PC-9 (cell line): ENCODE measurements at regions of chr17 and their contacts with region 1.

Region 1: GRCh38 chr17:75779231-75779986 is 5.2 kb upstream of the UNK start:
- DNase-seq: peak; percentile 94 to 99
- H3K4me3 ChIP-seq: peak overlapping the region; percentile 90
- H3K27ac ChIP-seq: peak overlapping the region; percentile 93
- H3K4me1 ChIP-seq: peaks cover 70% of the 10 kb centered on the region
- H3K27me3 ChIP-seq: no peaks in the 10 kb centered on the region
- CTCF ChIP-seq: no peak

Region 2: GRCh38 chr17:75619506-75620431 is 159.6 kb before region 1 on chr17:
- CTCF ChIA-PET with region 1: interaction called, 19 read pairs
- POLR2A ChIA-PET with region 1: no interaction called
- intact Hi-C with region 1: no loop called
- DNase-seq: no peak
- H3K4me3 ChIP-seq: no peak overlapping the region
- H3K27ac ChIP-seq: no peak overlapping the region
- H3K4me1 ChIP-seq: no peaks in the 10 kb centered on the region
- H3K27me3 ChIP-seq: no peaks in the 10 kb centered on the region
- CTCF ChIP-seq: peak; percentile 70

Region 3: GRCh38 chr17:75814900-75815373 is 35.5 kb after region 1 on chr17:
- CTCF ChIA-PET with region 1: no interaction called
- POLR2A ChIA-PET with region 1: interaction called, 5 read pairs
- intact Hi-C with region 1: loop called (anchors 5 kb)
- DNase-seq: peak; percentile 67 to 73
- H3K4me3 ChIP-seq: no peak overlapping the region
- H3K27ac ChIP-seq: no peak overlapping the region
- H3K4me1 ChIP-seq: peaks cover 10% of the 10 kb centered on the region
- H3K27me3 ChIP-seq: no peaks in the 10 kb centered on the region
- CTCF ChIP-seq: no peak

Region 4: GRCh38 chr17:75855310-75856081 is 76.1 kb after region 1 on chr17 and contains the start of gene WBP2:
- CTCF ChIA-PET with region 1: interaction called, 7 read pairs
- POLR2A ChIA-PET with region 1: interaction called, 9 read pairs
- intact Hi-C with region 1: loop called (anchors 2 kb)
- DNase-seq: peak; percentile 96 to 100
- H3K4me3 ChIP-seq: peak within 1 kb of the TSS; percentile 74
- H3K27ac ChIP-seq: peak within 1 kb of the TSS; percentile 79
- H3K4me1 ChIP-seq: peaks cover 23% of the 10 kb centered on the region
- H3K27me3 ChIP-seq: no peaks in the 10 kb centered on the region
- CTCF ChIP-seq: peak; percentile 52
- total RNA-seq, gene WBP2: 114 and 159 TPM in 2 replicates

Region 5: DNA sequence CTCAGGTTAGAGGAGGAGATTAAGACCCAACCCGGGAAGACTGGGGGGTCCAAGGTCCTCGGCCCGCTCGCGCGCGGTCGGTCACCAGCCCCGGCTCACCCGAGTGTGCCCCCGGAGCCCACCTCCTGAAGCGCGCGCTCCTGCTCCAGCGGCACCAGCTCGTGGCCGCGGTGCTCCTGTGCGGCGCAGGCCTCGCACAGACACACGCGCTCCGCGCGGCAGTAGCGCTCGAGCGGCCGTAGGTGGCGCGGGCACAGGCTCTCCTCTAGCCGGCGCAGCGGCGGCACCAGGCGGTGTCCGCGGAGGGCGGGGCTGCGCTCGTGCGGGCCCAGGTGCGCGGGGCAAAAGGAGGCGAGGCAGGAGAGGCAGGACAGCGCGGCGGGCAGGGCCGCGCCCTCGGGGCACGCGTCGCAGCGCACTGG is 98.4 kb after region 1 on chr17:
- CTCF ChIA-PET with region 1: interaction called, 4 read pairs
- POLR2A ChIA-PET with region 1: interaction called, 13 read pairs
- intact Hi-C with region 1: loop called (anchors 1 kb)
- DNase-seq: peak; percentile 66 to 74
- H3K4me3 ChIP-seq: peak overlapping the region; percentile 96
- H3K27ac ChIP-seq: peak overlapping the region; percentile 87
- H3K4me1 ChIP-seq: peaks cover 35% of the 10 kb centered on the region
- H3K27me3 ChIP-seq: no peaks in the 10 kb centered on the region
- CTCF ChIP-seq: no peak

Region 6: GRCh38 chr17:75940724-75941441 is 161.5 kb after region 1 on chr17 and contains the start of gene FBF1:
- CTCF ChIA-PET with region 1: no interaction called
- POLR2A ChIA-PET with region 1: interaction called, 10 read pairs
- intact Hi-C with region 1: no loop called
- DNase-seq: peak; percentile 90 to 96
- H3K4me3 ChIP-seq: peak within 1 kb of the TSS; percentile 89
- H3K27ac ChIP-seq: no peak within 1 kb of the TSS; the same call in 1 of the 2 replicates
- H3K4me1 ChIP-seq: peaks cover 6% of the 10 kb centered on the region
- H3K27me3 ChIP-seq: no peaks in the 10 kb centered on the region
- CTCF ChIP-seq: no peak
- total RNA-seq, gene FBF1: 22.5 and 28.7 TPM in 2 replicates

Region 7: GRCh38 chr17:76278952-76279741 is 499.7 kb after region 1 on chr17:
- CTCF ChIA-PET with region 1: no interaction called
- POLR2A ChIA-PET with region 1: no interaction called
- intact Hi-C with region 1: loop called (anchors 10 kb)
- DNase-seq: peak; percentile 47 to 83
- H3K4me3 ChIP-seq: no peak overlapping the region
- H3K27ac ChIP-seq: no peak overlapping the region
- H3K4me1 ChIP-seq: peaks cover 15% of the 10 kb centered on the region
- H3K27me3 ChIP-seq: no peaks in the 10 kb centered on the region
- CTCF ChIP-seq: peak; percentile 94